Tibial artery (tissue), 4 donors: ENCODE measurements at regions of chr3 and their contacts with region 1.

Region 1: GRCh38 chr3:27312044-27312668 is 57.0 kb downstream of the NEK10 start:
- DNase-seq: no peak
- H3K4me3 ChIP-seq: no peak overlapping the region
- H3K27ac ChIP-seq: no peak overlapping the region
- H3K4me1 ChIP-seq: no peaks in the 10 kb centered on the region
- H3K27me3 ChIP-seq: no peaks in the 10 kb centered on the region
- CTCF ChIP-seq: peak; percentile 77 to 84

Region 2: GRCh38 chr3:27467545-27467944 is 155.4 kb after region 1 on chr3:
- intact Hi-C with region 1: loop called (anchors 10 kb)
- DNase-seq: no peak
- H3K4me3 ChIP-seq: no peak overlapping the region
- H3K27ac ChIP-seq: peak overlapping the region in 1 of 2 donors; percentile 9
- H3K4me1 ChIP-seq: peaks cover 0 to 30% (median 11%) of the 10 kb centered on the region in 4 donors
- H3K27me3 ChIP-seq: no peaks in the 10 kb centered on the region
- CTCF ChIP-seq: peak; percentile 53 to 65

Region 3: GRCh38 chr3:27681245-27681748 is 369.1 kb after region 1 on chr3:
- intact Hi-C with region 1: loop called (anchors 5 kb)
- DNase-seq: no peak
- H3K4me3 ChIP-seq: no peak overlapping the region
- H3K27ac ChIP-seq: peak overlapping the region; percentile 34 to 54
- H3K4me1 ChIP-seq: peaks cover 0 to 36% (median 20%) of the 10 kb centered on the region in 4 donors
- H3K27me3 ChIP-seq: no peaks in the 10 kb centered on the region
- CTCF ChIP-seq: peak; percentile 40 to 66